HCT116 (cell line): ENCODE measurements at regions of chr2 and their contacts with region 1.

Region 1: GRCh38 chr2:218876562-218877219 is 4.0 kb upstream of the WNT10A start:
- DNase-seq: peak; percentile 59
- ATAC-seq: peak; percentile 69
- H3K4me3 ChIP-seq: no peak overlapping the region
- H3K27ac ChIP-seq: no peak overlapping the region
- H3K4me1 ChIP-seq: peaks cover 5 to 14% of the 10 kb centered on the region in 2 experiments; a peak in 3 of 4 replicates
- H3K27me3 ChIP-seq: no peaks in the 10 kb centered on the region
- CTCF ChIP-seq: peak; percentile 97 to 99 (median 98)
- POLR2A ChIP-seq: no peak
- RAD21 ChIP-seq: peak; percentile 99

Region 2: GRCh38 chr2:218582076-218582475 is 294.6 kb before region 1 on chr2:
- CTCF ChIA-PET with region 1: no interaction called
- POLR2A ChIA-PET with region 1: no interaction called
- RAD21 ChIA-PET with region 1: no interaction called
- intact Hi-C with region 1: no loop called
- DNase-seq: no peak
- ATAC-seq: no peak
- H3K4me3 ChIP-seq: no peak overlapping the region
- H3K27ac ChIP-seq: no peak overlapping the region
- H3K4me1 ChIP-seq: no peaks in the 10 kb centered on the region
- H3K27me3 ChIP-seq: no peaks in the 10 kb centered on the region
- CTCF ChIP-seq: no peak
- POLR2A ChIP-seq: no peak
- RAD21 ChIP-seq: no peak

Region 3: GRCh38 chr2:218892693-218893348 is 16.1 kb after region 1 on chr2:
- CTCF ChIA-PET with region 1: interaction called, 278 read pairs
- POLR2A ChIA-PET with region 1: interaction called, 7 read pairs
- RAD21 ChIA-PET with region 1: interaction called, 30 to 48 read pairs
- intact Hi-C with region 1: loop called (anchors 1 kb)
- DNase-seq: peak; percentile 56
- ATAC-seq: peak; percentile 66
- H3K4me3 ChIP-seq: peak overlapping the region; percentile 69 to 76
- H3K27ac ChIP-seq: peak overlapping the region; percentile 92
- H3K4me1 ChIP-seq: peaks cover 47 to 61% of the 10 kb centered on the region in 2 experiments
- H3K27me3 ChIP-seq: no peaks in the 10 kb centered on the region
- CTCF ChIP-seq: peak in 2 of 3 experiments; percentile 43 to 48; a peak in 4 of 6 replicates
- POLR2A ChIP-seq: no peak
- RAD21 ChIP-seq: no peak

Region 4: DNA sequence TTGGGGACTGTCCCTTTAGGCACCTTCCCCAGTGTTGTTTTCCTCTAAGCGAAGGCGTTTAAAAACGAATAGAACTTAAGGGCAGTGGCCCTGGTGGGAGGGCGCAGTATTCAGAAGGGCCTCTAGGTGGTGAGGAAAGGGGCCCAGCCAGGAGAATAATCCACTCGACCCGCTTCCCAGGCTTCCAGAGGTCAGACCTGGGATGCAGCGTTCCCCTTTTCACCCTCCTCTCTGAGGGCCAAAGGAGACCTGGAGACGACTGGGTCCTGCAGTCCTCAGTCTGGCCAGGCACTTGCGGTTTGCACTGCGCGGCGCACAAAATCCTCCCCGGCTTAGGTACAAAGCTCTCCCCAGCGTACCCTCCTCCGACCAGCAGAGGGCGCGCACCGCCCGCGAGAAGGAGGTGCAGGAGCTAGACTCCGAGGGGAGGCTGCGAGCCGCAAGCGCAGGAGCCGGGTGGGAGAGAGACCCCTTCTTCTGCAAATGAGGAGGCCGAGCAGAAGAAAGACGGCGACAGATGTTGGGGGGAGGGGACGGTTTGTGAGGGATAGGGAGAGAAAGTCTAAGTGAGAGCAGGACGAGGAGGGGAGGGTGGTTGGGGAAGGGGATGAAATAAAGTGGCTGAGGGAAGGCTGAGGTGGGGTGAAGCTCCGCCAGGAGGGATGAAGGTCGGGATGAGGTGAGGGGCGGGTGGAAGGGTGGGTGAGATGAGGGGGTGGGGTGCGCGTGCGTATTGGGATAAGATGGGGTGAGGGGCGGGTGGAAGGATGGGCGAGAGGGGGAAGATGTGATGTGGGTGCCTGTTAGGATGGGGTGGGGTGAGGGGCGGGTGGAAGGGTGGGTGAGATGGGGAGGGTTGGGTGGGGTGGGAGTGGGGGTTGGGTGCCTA is 103.4 kb after region 1 on chr2:
- CTCF ChIA-PET with region 1: interaction called, 18 read pairs
- POLR2A ChIA-PET with region 1: no interaction called
- RAD21 ChIA-PET with region 1: interaction called in 1 of 2 experiments, 6 read pairs
- intact Hi-C with region 1: loop called (anchors 2 kb)
- DNase-seq: peak; percentile 68
- ATAC-seq: peak; percentile 98
- H3K4me3 ChIP-seq: peak overlapping the region; percentile 38 to 54
- H3K27ac ChIP-seq: no peak overlapping the region
- H3K4me1 ChIP-seq: peaks cover 0 to 10% of the 10 kb centered on the region in 2 experiments; a peak in 1 of 4 replicates
- H3K27me3 ChIP-seq: no peaks in the 10 kb centered on the region
- CTCF ChIP-seq: peak; percentile 88 to 99 (median 99)
- POLR2A ChIP-seq: no peak
- RAD21 ChIP-seq: peak; percentile 91

Region 5: DNA sequence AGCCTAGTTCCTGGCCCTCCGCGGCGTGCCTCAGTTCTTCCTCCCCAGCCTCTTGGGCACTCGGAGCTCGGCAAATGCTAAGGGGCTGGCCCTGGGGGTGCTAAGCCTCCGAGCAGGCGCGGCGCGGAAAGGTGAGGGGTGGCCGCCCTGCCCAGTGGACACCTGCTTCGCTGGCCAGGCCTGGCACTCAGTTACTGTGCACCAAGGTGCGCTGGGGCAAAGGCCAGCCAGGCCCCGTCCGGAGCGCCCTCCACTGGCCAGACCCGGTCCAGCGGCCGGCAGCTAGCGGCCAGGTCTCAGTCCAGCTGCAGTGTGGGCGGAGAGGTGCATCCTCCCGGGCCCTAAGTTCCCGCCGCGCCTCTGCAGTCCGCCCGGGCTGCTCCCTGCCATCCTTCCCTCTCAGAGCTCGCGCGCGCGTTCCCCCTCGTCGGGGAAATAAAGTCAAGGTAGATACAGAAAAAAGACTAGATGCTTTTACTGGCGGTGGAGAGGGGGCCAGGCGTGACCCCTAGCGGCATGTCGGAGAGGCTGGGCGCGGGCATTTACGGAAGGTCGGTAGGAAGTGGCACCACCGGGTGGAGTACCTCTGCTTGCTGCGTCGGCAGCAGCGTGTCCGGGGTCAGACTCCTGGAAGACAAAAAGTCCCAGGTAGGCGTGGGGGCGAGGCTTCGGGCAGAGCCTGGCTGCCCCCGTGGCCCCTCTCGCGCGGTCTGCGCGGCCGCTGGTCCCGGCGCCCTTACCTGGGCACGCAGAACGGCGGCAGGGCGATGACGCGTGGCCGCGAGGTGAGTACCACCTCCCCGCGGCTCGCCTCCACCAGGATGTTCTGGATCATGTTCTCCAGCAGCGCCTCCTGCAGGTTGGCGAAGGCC is 125.9 kb after region 1 on chr2:
- CTCF ChIA-PET with region 1: interaction called, 6 read pairs
- POLR2A ChIA-PET with region 1: no interaction called
- RAD21 ChIA-PET with region 1: no interaction called
- intact Hi-C with region 1: loop called (anchors 2 kb)
- DNase-seq: peak; percentile 60
- ATAC-seq: peak; percentile 83
- H3K4me3 ChIP-seq: peak overlapping the region; percentile 56 to 68
- H3K27ac ChIP-seq: peak overlapping the region; percentile 51
- H3K4me1 ChIP-seq: peaks cover 9 to 35% of the 10 kb centered on the region in 2 experiments; a peak in 3 of 4 replicates
- H3K27me3 ChIP-seq: no peaks in the 10 kb centered on the region
- CTCF ChIP-seq: peak in 2 of 3 experiments; percentile 67 to 71; a peak in 4 of 6 replicates
- POLR2A ChIP-seq: no peak
- RAD21 ChIP-seq: no peak

Region 6: GRCh38 chr2:219119422-219120043 is 242.8 kb after region 1 on chr2:
- CTCF ChIA-PET with region 1: interaction called, 6 read pairs
- POLR2A ChIA-PET with region 1: no interaction called
- RAD21 ChIA-PET with region 1: no interaction called
- intact Hi-C with region 1: loop called (anchors 5 kb)
- DNase-seq: peak; percentile 27
- ATAC-seq: peak; percentile 93
- H3K4me3 ChIP-seq: no peak overlapping the region
- H3K27ac ChIP-seq: no peak overlapping the region
- H3K4me1 ChIP-seq: peaks cover 7 to 8% of the 10 kb centered on the region in 2 experiments
- H3K27me3 ChIP-seq: no peaks in the 10 kb centered on the region; the same call in 1 of the 2 replicates
- CTCF ChIP-seq: peak; percentile 67 to 93 (median 90)
- POLR2A ChIP-seq: no peak
- RAD21 ChIP-seq: peak; percentile 91

Region 7: DNA sequence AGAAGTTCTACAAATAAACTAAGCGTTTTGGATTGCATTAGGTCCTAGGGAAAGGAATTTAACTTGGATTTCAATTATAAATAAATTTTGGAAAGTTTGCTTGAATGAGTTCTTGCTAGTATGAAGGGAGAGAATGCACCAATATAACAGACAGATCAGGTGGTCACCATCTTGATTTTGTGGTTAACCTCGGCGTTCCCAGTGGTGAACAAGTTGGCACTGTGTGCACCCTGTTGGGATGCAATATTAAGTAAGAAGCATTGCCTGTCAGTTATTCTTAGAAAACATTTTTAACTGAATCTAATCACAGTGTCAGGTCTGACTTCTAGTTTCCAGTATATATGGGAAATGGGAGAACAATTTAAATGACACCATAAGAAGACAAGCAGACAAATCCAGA is 1424.1 kb after region 1 on chr2:
- CTCF ChIA-PET with region 1: no interaction called
- POLR2A ChIA-PET with region 1: no interaction called
- RAD21 ChIA-PET with region 1: no interaction called
- intact Hi-C with region 1: no loop called
- DNase-seq: no peak
- ATAC-seq: no peak
- H3K4me3 ChIP-seq: no peak overlapping the region
- H3K27ac ChIP-seq: no peak overlapping the region
- H3K4me1 ChIP-seq: peaks cover 0 to 7% of the 10 kb centered on the region in 2 experiments; a peak in 1 of 4 replicates
- H3K27me3 ChIP-seq: no peaks in the 10 kb centered on the region
- CTCF ChIP-seq: no peak
- POLR2A ChIP-seq: no peak
- RAD21 ChIP-seq: no peak